WTC11 (cell line): ENCODE measurements at regions of chr2 and their contacts with region 1.

Region 1: GRCh38 chr2:119290859-119291587 is 67.4 kb downstream of the STEAP3 start:
- DNase-seq: peak; percentile 90
- ATAC-seq: peak; percentile 99
- H3K4me3 Mint-ChIP-seq: no peak overlapping the region
- H3K27ac Mint-ChIP-seq: no peak overlapping the region
- H3K4me1 Mint-ChIP-seq: peaks cover 13% of the 10 kb centered on the region
- H3K27me3 Mint-ChIP-seq: no peaks in the 10 kb centered on the region
- CTCF ChIP-seq: peak; percentile 73

Region 2: GRCh38 chr2:119025762-119026389 is 265.1 kb before region 1 on chr2:
- CTCF ChIA-PET with region 1: interaction called, 11 read pairs
- POLR2A ChIA-PET with region 1: no interaction called
- DNase-seq: no peak
- ATAC-seq: peak; percentile 62
- H3K4me3 Mint-ChIP-seq: no peak overlapping the region
- H3K27ac Mint-ChIP-seq: no peak overlapping the region
- H3K4me1 Mint-ChIP-seq: peaks cover 11% of the 10 kb centered on the region
- H3K27me3 Mint-ChIP-seq: peaks cover 3% of the 10 kb centered on the region; the same call in 1 of the 2 replicates
- CTCF ChIP-seq: no peak

Region 3: DNA sequence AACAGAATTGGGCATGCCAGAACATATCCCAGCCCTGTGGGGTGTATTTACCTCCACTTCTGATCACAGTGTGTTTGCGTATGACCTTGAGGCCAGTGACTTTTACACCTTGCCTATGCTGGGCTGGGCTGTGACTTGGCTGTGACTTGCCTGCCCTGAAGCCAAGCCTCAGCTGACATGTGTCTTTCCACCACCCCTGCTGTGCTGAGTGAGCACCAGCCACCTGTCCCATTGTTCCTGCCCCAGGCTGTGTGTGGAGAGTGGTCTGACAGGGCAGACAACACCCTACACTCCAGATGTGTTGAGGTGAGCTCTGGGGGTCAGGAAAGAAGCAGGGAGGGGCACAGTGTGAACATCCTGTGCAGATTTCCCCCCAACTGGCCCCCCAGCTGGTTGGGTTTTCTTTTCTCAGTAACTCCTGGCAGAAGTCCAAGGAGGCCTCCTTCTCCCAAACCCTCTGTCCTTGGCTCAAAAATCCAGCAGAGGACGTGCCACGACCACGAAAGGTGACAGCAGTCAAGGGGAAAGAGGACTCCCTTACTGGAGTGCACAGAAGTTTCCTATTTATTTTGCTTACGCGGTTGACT is 72.5 kb before region 1 on chr2:
- CTCF ChIA-PET with region 1: interaction called, 10 read pairs
- POLR2A ChIA-PET with region 1: no interaction called
- DNase-seq: no peak
- ATAC-seq: peak; percentile 34
- H3K4me3 Mint-ChIP-seq: no peak overlapping the region
- H3K27ac Mint-ChIP-seq: no peak overlapping the region
- H3K4me1 Mint-ChIP-seq: peaks cover 68% of the 10 kb centered on the region
- H3K27me3 Mint-ChIP-seq: peaks cover 14% of the 10 kb centered on the region
- CTCF ChIP-seq: no peak

Region 4: DNA sequence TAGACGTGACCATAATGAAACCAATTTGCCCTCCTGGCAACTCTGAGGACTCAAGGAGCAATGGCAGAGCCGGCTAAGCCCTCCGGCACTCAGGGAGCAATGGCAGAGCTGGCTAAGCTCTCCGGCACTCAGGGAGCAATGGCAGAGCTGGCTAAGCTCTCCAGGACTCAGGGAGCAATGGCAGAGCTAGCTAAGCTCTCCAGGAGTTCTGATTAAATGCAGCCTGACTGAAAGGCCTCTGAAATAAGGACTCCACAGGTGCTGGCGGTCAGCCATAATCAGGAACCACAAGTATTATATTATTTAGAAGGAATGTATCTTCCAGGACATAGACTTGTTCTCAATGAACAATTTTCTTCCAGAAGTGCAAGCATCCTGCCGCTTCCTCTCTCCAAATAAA is 10.4 kb after region 1 on chr2:
- CTCF ChIA-PET with region 1: interaction called, 21 read pairs
- POLR2A ChIA-PET with region 1: no interaction called
- DNase-seq: no peak
- ATAC-seq: peak; percentile 51; the same call in 1 of the 2 replicates
- H3K4me3 Mint-ChIP-seq: no peak overlapping the region
- H3K27ac Mint-ChIP-seq: no peak overlapping the region
- H3K4me1 Mint-ChIP-seq: peaks cover 39% of the 10 kb centered on the region
- H3K27me3 Mint-ChIP-seq: no peaks in the 10 kb centered on the region
- CTCF ChIP-seq: no peak

Region 5: DNA sequence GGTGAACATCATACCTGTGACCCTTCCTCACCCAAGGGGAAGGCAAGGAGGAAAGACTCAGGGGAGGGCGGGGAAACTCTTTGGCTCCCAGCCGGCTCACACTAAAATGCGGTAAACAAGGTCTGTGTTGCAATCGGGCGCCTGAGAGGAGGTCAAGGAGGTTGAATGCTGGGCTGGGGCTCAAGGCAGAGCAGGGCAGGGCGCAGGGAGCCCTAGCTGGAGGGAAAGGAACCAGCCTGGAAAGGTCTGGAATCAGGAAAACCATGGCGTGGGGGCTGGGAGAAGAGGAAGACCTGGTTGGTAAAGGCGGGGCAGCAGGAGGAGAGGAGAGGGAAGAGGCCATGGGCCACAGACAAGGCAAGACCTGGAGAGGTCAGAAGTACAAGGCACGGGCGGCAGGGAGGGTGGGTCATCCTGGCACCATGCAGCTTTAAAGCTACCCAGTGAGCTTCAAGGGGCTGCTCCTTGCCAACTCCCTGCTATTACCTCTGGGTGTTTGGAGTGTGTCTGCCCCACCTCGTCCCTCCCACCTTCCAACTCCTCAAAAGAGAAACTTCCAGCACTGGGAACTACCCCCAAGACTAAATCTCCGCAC is 135.9 kb after region 1 on chr2:
- CTCF ChIA-PET with region 1: no interaction called
- POLR2A ChIA-PET with region 1: no interaction called
- DNase-seq: no peak
- ATAC-seq: no peak
- H3K4me3 Mint-ChIP-seq: no peak overlapping the region
- H3K27ac Mint-ChIP-seq: no peak overlapping the region
- H3K4me1 Mint-ChIP-seq: peaks cover 44% of the 10 kb centered on the region
- H3K27me3 Mint-ChIP-seq: peaks cover 32% of the 10 kb centered on the region
- CTCF ChIP-seq: no peak

Region 6: GRCh38 chr2:119544075-119544938 is 253.3 kb after region 1 on chr2 and contains the start of gene CFAP221:
- CTCF ChIA-PET with region 1: no interaction called
- POLR2A ChIA-PET with region 1: no interaction called
- DNase-seq: peak; percentile 87
- ATAC-seq: peak; percentile 92
- H3K4me3 Mint-ChIP-seq: peak within 1 kb of the TSS; percentile 84
- H3K27ac Mint-ChIP-seq: no peak within 1 kb of the TSS
- H3K4me1 Mint-ChIP-seq: peaks cover 6% of the 10 kb centered on the region
- H3K27me3 Mint-ChIP-seq: peaks cover 32% of the 10 kb centered on the region
- CTCF ChIP-seq: no peak
- total RNA-seq, gene CFAP221: 0.14 to 0.94 TPM (median 0.35 TPM) in 3 replicates